ENCODE measurements at regions of chr9 and their contacts with region 1.

Region 1: DNA sequence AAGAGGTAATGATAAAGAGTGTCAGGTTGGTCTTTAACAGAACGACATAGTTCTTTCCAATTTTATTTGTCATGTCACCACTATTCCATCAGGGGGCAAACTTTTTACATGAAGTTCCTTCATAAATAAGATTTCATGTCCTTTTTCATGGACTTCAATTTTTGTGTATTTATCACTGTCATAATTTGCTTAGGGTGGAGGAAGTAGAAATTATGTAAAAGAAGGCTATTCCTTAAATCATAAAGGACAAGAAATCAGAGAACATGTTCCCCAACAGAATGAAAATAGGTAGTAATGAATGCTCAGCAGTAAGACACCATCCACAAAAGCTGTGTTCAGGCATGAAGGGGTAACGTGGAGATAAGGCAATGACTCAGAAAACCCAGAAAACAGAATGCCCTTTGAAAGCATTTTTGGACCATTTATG is 72.7 kb downstream of the ZFAND5 start:
- DNase-seq: no peak
- H3K4me3 ChIP-seq: no peak overlapping the region
- H3K27ac ChIP-seq: no peak overlapping the region
- H3K27me3 ChIP-seq: peaks cover 6% of the 10 kb centered on the region
- CTCF ChIP-seq: peak; percentile 54

Region 2: GRCh38 chr9:72305102-72305546 is 12.9 kb after region 1 on chr9:
- CTCF ChIA-PET with region 1: no interaction called
- POLR2A ChIA-PET with region 1: no interaction called
- DNase-seq: no peak
- H3K4me3 ChIP-seq: no peak overlapping the region
- H3K27ac ChIP-seq: no peak overlapping the region
- H3K27me3 ChIP-seq: no peaks in the 10 kb centered on the region
- CTCF ChIP-seq: no peak

Region 3: DNA sequence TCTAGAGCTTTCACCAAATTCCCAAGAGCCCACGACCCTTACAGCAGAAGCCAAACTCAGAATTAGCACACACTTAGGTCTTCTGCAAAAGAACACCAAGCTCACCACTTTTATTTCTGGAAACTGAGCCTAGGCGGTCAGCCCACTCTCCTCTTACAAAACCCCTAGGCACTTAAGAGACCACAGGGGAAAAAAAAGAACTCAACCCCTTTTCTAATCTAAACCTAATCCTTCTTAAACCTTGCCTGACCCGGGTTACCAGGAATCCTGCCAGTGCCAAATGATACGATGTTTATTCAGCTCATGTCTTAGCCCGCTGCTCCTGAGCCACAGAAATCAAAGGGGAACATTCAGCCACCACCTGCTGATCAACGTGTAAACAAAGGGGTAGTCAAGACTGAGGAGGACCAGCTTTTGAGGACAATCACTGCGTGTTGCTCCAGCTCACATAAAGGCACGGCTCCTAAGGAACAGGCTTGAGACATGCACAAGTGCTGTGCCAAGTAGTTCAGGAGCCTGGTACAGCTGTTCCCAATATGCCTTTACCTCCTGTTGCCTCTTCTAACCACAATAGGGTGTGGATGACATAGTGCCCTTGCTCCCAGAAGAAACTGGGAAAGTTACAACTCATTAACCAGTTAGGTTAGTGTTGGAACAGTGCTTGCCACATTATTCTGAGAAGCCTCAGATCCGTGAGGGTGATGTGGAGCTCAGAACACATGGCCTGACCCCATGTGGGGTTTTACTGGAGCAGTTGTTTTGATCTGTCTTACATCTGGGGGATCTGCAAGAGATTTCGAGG is 23.4 kb after region 1 on chr9:
- CTCF ChIA-PET with region 1: interaction called, 17 read pairs
- POLR2A ChIA-PET with region 1: no interaction called
- DNase-seq: no peak
- H3K4me3 ChIP-seq: no peak overlapping the region
- H3K27ac ChIP-seq: peak overlapping the region; percentile 22
- H3K27me3 ChIP-seq: no peaks in the 10 kb centered on the region
- CTCF ChIP-seq: no peak

Region 4: DNA sequence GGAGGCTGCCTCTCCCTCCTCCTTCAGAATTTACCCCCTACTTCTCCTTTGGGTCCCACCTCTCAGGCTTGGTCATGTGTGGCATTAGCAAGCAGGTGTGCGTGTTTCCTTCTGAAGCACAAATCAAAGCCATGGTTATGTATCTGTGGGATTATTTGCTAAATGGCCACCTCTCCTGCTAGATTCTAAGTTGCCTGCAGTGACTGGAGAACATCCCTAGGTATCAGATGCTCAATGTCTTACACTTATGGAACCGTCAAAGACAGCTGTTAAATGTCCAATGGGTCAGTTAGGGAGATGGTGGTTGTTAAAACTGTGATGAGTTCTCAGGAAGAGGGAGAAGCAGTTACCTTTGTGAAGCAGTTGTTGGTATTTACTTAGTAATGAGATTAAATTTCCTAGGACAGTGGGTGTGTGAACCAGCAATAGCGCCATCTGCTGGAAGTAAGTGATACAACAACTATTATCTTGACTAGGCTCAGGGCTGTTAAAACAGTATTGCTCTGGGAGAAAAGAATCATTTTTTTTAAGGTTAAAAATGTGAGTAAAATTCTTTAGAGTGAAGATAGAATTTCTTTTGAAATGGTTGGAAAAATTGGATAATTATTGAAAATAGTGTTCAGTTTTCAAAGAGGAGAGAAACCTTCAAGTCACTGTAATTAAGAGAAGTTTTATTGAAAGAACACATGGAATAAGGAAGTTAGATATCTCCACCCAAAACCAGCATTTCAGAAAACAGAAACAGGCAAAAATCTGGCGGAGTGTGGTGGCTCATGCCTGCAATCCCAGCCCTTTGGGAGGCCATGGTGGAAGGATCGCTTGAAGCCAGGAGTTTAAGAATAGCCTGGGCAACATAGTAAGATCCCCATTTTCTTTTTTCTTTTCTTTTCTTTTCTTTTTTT is 300.5 kb after region 1 on chr9:
- CTCF ChIA-PET with region 1: interaction called, 26 read pairs
- POLR2A ChIA-PET with region 1: no interaction called
- DNase-seq: peak; percentile 42
- H3K4me3 ChIP-seq: no peak overlapping the region
- H3K27ac ChIP-seq: no peak overlapping the region
- H3K27me3 ChIP-seq: no peaks in the 10 kb centered on the region
- CTCF ChIP-seq: peak; percentile 75

Region 5: GRCh38 chr9:72753266-72753893 is 461.1 kb after region 1 on chr9:
- CTCF ChIA-PET with region 1: interaction called, 31 read pairs
- POLR2A ChIA-PET with region 1: no interaction called
- DNase-seq: no peak
- H3K4me3 ChIP-seq: no peak overlapping the region
- H3K27ac ChIP-seq: no peak overlapping the region
- H3K27me3 ChIP-seq: no peaks in the 10 kb centered on the region
- CTCF ChIP-seq: peak; percentile 46

Region 6: DNA sequence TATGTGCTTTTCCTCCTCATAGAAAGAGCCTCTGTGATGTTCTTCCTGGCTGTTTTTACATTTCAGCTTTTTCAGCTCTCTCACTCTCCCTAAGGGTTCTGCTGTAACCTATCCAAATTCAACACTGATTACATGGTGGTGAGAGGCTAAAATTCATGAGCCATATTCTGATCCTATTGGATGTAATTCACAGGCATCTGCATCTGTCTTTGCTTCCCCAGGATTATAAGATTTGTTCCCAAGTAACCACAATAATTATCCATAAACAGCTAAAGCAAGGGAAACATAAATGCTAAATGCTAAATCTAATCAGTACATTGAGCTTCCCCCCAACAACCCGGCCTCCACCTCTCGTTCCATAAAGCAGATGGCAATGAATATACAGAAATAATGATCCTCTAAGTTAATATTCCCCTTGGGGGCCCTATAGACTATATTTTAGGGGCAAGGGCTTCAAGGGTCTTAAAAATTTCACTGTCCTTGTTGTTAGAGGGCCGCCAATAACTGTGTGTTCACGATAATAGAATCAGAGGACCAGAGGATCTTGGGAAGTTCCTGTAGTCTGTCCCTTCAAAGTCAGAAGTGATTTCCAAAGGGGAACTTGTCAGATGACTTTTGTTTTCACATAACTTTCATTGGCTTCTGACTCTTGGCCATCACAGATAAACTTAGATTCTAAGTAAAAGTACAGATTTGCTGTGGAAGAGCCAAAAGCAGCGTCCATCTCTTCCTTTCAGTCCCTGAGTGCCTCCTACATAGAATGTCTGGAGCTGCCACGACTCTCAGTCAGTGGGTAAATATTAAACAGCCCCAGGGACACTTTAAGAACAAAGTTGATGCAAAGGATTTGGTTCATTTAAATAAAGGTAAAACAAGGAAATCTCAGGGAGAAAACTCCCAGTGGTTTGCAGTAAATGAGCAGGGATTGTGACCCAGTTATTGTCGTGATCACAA is 535.0 kb after region 1 on chr9:
- CTCF ChIA-PET with region 1: interaction called, 34 read pairs
- POLR2A ChIA-PET with region 1: no interaction called
- DNase-seq: no peak
- H3K4me3 ChIP-seq: no peak overlapping the region
- H3K27ac ChIP-seq: no peak overlapping the region
- H3K27me3 ChIP-seq: no peaks in the 10 kb centered on the region
- CTCF ChIP-seq: no peak

Measured in AG04450 (cell line).